Gastrocnemius medialis (tissue), 4 donors: ENCODE measurements at regions of chr1 and their contacts with region 1.

Region 1: DNA sequence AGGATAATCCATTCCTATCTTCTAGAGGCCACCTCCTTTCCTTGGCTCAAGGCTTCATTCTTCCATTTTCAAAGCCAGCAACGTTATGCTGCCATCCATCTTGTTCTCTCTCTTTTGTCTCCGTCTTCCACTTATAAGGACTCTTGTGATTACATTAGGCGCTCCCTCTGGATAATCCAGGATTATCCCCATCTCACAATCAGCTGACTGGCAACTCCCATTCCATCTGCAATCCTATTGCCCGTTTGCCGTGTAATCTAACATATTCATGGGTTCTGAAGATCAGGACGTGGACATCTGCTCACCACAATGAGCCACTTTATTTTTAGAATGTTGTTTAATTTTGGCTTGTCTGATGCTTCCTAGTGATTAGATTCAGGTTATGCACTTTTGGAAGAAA is 89.3 kb downstream of the EBNA1BP2 start:
- DNase-seq: no peak
- ATAC-seq: no peak
- H3K4me3 ChIP-seq: no peak overlapping the region
- H3K27ac ChIP-seq: no peak overlapping the region
- H3K4me1 ChIP-seq: no peaks in the 10 kb centered on the region
- H3K27me3 ChIP-seq: no peaks in the 10 kb centered on the region
- CTCF ChIP-seq: no peak
- POLR2A ChIP-seq: no peak

Region 2: DNA sequence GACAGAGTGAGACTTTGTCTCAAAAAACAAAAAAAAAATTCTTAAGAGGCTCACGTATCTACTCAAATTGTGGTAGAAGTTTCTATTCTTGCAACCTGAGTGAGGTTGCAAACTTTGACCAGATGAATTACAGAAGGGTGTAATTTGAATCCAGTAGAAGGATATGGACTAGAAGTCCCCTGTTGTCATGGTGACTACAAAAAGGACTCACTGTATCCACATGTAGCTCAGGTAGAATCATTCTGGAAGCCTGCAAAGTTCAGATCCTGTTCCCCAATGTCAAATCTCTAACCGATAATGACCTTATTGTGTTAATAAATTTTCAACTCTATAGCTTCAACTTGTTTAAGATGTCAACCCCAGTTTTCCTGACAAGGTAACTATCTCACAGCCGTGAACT is 189.6 kb before region 1 on chr1:
- in situ Hi-C with region 1: no loop called
- intact Hi-C with region 1: no loop called
- DNase-seq: no peak
- ATAC-seq: no peak
- H3K4me3 ChIP-seq: no peak overlapping the region
- H3K27ac ChIP-seq: no peak overlapping the region
- H3K4me1 ChIP-seq: no peaks in the 10 kb centered on the region
- H3K27me3 ChIP-seq: no peaks in the 10 kb centered on the region
- CTCF ChIP-seq: no peak
- POLR2A ChIP-seq: no peak

Region 3: GRCh38 chr1:42908046-42908445 is 174.7 kb before region 1 on chr1:
- in situ Hi-C with region 1: loop called in 2 of 4 experiments (anchors 5 kb)
- intact Hi-C with region 1: no loop called
- DNase-seq: no peak
- ATAC-seq: no peak
- H3K4me3 ChIP-seq: no peak overlapping the region
- H3K27ac ChIP-seq: no peak overlapping the region
- H3K4me1 ChIP-seq: no peaks in the 10 kb centered on the region
- H3K27me3 ChIP-seq: no peaks in the 10 kb centered on the region
- CTCF ChIP-seq: no peak
- POLR2A ChIP-seq: no peak